Heart right ventricle (tissue), 16 donors: ENCODE measurements at regions of chr9 and their contacts with region 1.

Region 1: DNA sequence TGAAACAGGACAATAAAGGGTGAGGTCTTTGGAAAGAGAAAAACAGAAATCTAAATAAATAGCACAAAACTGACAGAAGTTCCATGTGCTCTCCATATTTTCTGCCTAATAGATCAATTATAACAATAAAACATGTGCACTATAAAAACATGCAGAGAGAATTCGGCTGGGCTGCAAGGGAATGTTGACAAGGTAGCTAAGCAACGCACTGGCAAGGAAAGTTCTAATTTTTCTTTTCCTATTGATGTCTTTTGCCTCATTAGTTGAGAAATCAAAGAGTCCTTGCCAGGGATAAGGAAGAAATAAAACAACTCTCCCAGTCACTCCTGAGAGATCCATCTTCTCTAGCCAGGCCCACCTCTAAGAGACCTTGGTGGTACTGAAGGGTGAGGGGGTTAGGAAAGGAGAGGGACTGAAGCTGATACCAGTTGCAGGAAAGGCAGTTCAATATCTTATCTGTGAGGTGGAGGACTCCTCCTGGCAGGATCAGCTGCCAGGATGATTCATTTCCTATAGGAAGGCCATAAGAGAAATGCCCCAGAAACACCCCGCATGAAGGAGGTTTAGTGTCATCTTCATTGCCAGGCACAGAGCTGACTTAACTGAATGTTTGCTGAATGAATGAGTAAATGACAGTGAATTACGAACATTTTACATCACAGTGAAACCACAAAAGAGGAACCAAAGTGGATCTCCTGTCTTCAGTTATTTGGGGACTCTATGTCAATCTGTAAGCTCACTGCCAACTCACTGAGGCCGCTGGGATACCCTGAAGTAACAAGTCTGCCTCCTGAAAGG is 63.7 kb upstream of the IFNK start:
- DNase-seq: peak in 1 of 2 donors; percentile 12
- ATAC-seq: peak in 6 of 8 donors; percentile 31 to 79 (median 64)
- H3K4me3 ChIP-seq: no peak overlapping the region
- H3K27ac ChIP-seq: peak overlapping the region in 1 of 10 donors; percentile 32
- H3K4me1 ChIP-seq: peaks cover 0 to 36% (median 16%) of the 10 kb centered on the region in 9 donors
- H3K27me3 ChIP-seq: no peaks in the 10 kb centered on the region
- CTCF ChIP-seq: no peak

Region 2: DNA sequence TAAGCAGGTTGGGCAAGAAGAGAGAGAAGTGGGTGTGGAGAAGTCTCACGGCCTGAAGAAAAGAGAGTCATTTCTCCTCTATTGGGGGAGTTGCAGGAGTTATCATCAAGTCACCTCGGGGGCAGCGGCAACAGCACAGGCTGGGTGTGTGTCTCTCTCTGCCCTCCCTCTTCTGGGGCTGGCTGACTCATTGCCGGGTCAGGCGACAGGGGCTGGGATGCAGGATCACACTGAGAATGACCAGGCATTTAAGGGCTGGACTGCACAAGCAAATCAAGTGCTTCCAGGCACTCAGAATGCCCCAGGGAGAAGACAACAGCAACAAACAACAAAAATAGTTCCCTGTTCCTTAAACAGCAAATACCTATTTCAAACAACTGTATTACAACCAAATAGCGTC is 157.2 kb before region 1 on chr9:
- intact Hi-C with region 1: no loop called
- DNase-seq: no peak
- ATAC-seq: peak in 4 of 8 donors; percentile 49 to 79 (median 52)
- H3K4me3 ChIP-seq: no peak overlapping the region
- H3K27ac ChIP-seq: no peak overlapping the region
- H3K4me1 ChIP-seq: no peaks in the 10 kb centered on the region
- H3K27me3 ChIP-seq: no peaks in the 10 kb centered on the region
- CTCF ChIP-seq: no peak

Region 3: GRCh38 chr9:27377147-27377807 is 83.1 kb before region 1 on chr9:
- intact Hi-C with region 1: no loop called
- DNase-seq: no peak
- ATAC-seq: no peak
- H3K4me3 ChIP-seq: no peak overlapping the region
- H3K27ac ChIP-seq: no peak overlapping the region
- H3K4me1 ChIP-seq: no peaks in the 10 kb centered on the region
- H3K27me3 ChIP-seq: peaks cover 0 to 3% (median 0%) of the 10 kb centered on the region in 7 donors
- CTCF ChIP-seq: no peak

Region 4: GRCh38 chr9:27414220-27414761 is 46.1 kb before region 1 on chr9:
- intact Hi-C with region 1: loop called in 1 of 10 experiments (anchors 5 kb)
- DNase-seq: peak; percentile 30 to 73
- ATAC-seq: peak; percentile 55 to 92 (median 84)
- H3K4me3 ChIP-seq: peak overlapping the region in 5 of 10 donors; percentile 29 to 46 (median 33)
- H3K27ac ChIP-seq: peak overlapping the region in 3 of 10 donors; percentile 18 to 55 (median 45)
- H3K4me1 ChIP-seq: peaks cover 0 to 27% (median 15%) of the 10 kb centered on the region in 9 donors
- H3K27me3 ChIP-seq: no peaks in the 10 kb centered on the region
- CTCF ChIP-seq: no peak

Region 5: DNA sequence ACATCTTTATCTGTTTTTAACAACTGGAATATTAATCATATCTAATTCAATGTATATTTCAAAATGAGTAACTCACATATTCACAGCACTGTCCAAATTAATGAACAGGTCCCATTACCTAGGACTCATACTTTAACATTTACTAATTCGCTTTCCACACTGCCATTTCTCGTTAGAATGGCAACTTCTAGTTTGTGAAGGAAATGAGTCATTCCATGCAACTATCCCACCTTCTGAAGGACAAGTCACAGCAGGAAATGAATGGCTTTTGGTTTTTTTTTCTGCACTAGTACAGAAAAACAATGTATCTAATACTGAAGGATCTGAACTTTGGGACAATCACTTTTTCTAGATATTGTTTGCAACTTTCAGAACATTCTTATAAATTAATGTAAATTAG is 39.1 kb after region 1 on chr9:
- intact Hi-C with region 1: loop called in 1 of 10 experiments (anchors 5 kb)
- DNase-seq: no peak
- ATAC-seq: peak in 1 of 8 donors; percentile 50
- H3K4me3 ChIP-seq: no peak overlapping the region
- H3K27ac ChIP-seq: peak overlapping the region in 1 of 10 donors; percentile 36
- H3K4me1 ChIP-seq: peaks cover 0 to 30% (median 16%) of the 10 kb centered on the region in 9 donors
- H3K27me3 ChIP-seq: no peaks in the 10 kb centered on the region
- CTCF ChIP-seq: no peak

Region 6: GRCh38 chr9:27610622-27611021 is 150.2 kb after region 1 on chr9:
- intact Hi-C with region 1: no loop called
- DNase-seq: no peak
- ATAC-seq: no peak
- H3K4me3 ChIP-seq: no peak overlapping the region
- H3K27ac ChIP-seq: no peak overlapping the region
- H3K4me1 ChIP-seq: no peaks in the 10 kb centered on the region
- H3K27me3 ChIP-seq: peaks cover 0 to 12% (median 6%) of the 10 kb centered on the region in 7 donors
- CTCF ChIP-seq: no peak